SK-N-SH (cell line): ENCODE measurements at regions of chr3 and their contacts with region 1.

Region 1: DNA sequence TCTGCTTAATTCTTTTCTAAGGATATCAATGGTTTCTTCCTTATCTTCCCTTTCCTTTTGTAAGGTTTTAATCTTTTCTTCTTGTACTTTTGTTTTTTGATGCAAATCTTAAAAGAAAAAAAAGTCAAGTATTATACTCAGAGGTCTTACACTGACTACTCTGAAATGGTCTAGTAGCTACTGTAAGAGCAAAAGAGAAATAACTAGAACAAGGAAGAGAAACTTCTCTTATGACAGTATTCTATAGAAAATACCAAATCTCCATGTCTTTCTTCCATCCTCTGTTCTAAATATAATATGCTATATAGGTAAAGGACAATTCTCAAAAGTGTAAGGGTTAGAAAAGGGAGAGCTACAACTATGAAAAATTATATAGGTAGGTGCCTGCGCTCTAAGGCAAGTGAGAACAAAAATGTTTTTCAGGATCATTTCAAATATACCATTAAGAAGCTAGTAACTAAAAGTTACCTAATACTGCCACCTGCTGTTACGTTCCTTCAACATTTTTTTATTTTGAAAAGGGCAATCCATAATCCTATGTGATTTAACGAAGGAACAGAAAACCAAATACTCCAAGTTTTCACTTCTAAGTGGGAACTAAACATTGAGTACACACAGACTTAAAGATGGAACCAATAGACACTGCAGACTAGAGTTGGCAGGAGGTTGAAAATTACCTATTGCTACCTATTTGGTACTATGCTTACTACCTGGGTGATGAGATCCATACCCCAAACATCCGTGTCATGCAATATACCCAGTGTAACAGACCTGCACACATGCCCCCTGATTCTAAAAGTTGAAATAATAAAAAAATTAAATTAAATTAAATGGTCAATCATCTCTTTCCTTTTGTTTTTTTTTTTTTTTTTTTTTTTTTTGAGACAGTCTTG is 36.7 kb downstream of the CIP2A start:
- DNase-seq: peak; percentile 11
- H3K4me3 ChIP-seq: no peak overlapping the region; a peak in 1 of 4 replicates
- H3K27ac ChIP-seq: peak overlapping the region; percentile 23 to 34; a peak in 1 of 4 replicates
- H3K4me1 ChIP-seq: no peaks in the 10 kb centered on the region; a peak in 1 of 4 replicates
- H3K27me3 ChIP-seq: no peaks in the 10 kb centered on the region
- CTCF ChIP-seq: peak; percentile 69
- EP300 ChIP-seq: no peak
- RAD21 ChIP-seq: peak; percentile 81

Region 2: DNA sequence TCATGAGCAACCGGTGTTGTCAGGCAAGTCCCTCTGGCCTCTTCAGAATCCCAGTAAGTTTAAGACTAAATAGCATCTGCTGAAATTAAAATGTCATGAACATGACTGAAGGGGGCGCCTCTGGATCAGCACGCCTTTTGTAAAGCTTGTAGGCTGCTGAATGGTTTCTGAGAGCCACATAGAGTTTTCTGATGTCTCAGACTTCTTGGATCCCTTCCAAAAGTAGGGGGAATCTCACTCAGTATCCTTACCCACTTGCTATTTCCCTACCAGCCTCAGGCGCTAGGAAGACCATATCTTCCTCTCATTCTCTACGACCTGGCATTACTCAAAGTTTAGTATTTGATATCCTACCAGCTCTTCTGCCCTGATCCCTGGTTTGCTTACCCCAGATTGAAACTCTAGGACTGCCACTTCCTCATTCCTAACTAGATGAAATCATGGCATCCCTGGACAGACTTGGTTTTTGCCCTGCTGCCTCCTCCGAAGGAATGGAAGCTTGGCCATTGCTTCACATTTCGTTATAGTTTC is 399.0 kb before region 1 on chr3:
- CTCF ChIA-PET with region 1: no interaction called
- POLR2A ChIA-PET with region 1: no interaction called
- DNase-seq: peak; percentile 17
- H3K4me3 ChIP-seq: no peak overlapping the region; a peak in 1 of 4 replicates
- H3K27ac ChIP-seq: no peak overlapping the region
- H3K4me1 ChIP-seq: peaks cover 0 to 5% of the 10 kb centered on the region in 2 experiments; a peak in 1 of 4 replicates
- H3K27me3 ChIP-seq: no peaks in the 10 kb centered on the region
- CTCF ChIP-seq: peak; percentile 54
- EP300 ChIP-seq: no peak
- RAD21 ChIP-seq: peak; percentile 74

Region 3: DNA sequence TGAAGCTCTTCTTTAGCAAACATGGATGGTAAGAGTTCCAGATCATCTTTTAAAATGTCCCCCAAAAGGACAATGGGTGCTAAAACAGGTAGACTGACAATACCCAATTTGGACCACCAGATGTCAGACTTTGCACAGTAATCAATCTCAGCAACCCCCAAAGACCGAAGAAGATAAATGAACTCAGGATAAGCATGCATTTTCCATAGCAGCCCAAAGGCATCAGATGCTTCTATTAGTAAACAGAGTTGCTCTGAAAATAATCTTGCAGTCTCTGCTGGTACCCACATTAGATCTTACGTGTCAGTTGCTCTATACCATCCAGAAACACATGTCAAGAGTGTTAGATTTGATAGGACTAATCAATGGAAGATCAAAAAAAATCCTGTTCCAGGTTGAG is 62.7 kb before region 1 on chr3:
- CTCF ChIA-PET with region 1: interaction called, 233 read pairs
- POLR2A ChIA-PET with region 1: no interaction called
- DNase-seq: peak; percentile 45
- H3K4me3 ChIP-seq: no peak overlapping the region; a peak in 1 of 4 replicates
- H3K27ac ChIP-seq: no peak overlapping the region
- H3K4me1 ChIP-seq: peaks cover 18 to 29% of the 10 kb centered on the region in 2 experiments
- H3K27me3 ChIP-seq: no peaks in the 10 kb centered on the region
- CTCF ChIP-seq: peak; percentile 78
- EP300 ChIP-seq: no peak
- RAD21 ChIP-seq: peak; percentile 97

Region 4: GRCh38 chr3:108497271-108497670 is 55.2 kb before region 1 on chr3:
- CTCF ChIA-PET with region 1: interaction called, 233 read pairs
- POLR2A ChIA-PET with region 1: no interaction called
- DNase-seq: no peak
- H3K4me3 ChIP-seq: no peak overlapping the region
- H3K27ac ChIP-seq: no peak overlapping the region
- H3K4me1 ChIP-seq: peaks cover 0 to 8% of the 10 kb centered on the region in 2 experiments; a peak in 1 of 4 replicates
- H3K27me3 ChIP-seq: no peaks in the 10 kb centered on the region
- CTCF ChIP-seq: no peak
- EP300 ChIP-seq: no peak
- RAD21 ChIP-seq: no peak

Region 5: GRCh38 chr3:108505811-108506210 is 46.7 kb before region 1 on chr3:
- CTCF ChIA-PET with region 1: interaction called, 41 read pairs
- POLR2A ChIA-PET with region 1: no interaction called
- DNase-seq: no peak
- H3K4me3 ChIP-seq: no peak overlapping the region
- H3K27ac ChIP-seq: no peak overlapping the region
- H3K4me1 ChIP-seq: peaks cover 0 to 18% of the 10 kb centered on the region in 2 experiments; a peak in 2 of 4 replicates
- H3K27me3 ChIP-seq: no peaks in the 10 kb centered on the region
- CTCF ChIP-seq: no peak; the same call in 1 of the 2 replicates
- EP300 ChIP-seq: no peak
- RAD21 ChIP-seq: peak; percentile 50

Region 6: DNA sequence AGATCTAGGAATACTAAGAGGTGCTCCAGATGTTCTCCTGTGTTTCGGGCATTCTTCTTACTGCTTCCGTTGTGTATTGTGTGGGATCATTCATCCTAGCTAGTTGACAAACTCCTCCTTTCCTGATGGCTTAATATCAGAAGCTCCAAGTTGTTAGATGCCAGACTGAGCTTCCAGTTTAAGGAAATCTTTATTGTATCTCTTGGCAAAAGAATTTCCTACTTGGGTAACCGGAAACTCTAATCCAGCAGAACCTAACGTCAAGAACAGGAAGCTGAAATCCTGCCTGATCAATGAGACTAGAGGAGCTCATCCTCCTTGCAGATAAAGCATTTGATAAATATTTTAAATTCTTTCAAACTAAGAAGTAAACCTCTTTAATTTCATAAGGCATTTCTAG is 14.4 kb before region 1 on chr3:
- CTCF ChIA-PET with region 1: interaction called, 22 read pairs
- POLR2A ChIA-PET with region 1: no interaction called
- DNase-seq: no peak
- H3K4me3 ChIP-seq: no peak overlapping the region
- H3K27ac ChIP-seq: no peak overlapping the region
- H3K4me1 ChIP-seq: no peaks in the 10 kb centered on the region
- H3K27me3 ChIP-seq: no peaks in the 10 kb centered on the region
- CTCF ChIP-seq: no peak
- EP300 ChIP-seq: no peak
- RAD21 ChIP-seq: no peak

Region 7: DNA sequence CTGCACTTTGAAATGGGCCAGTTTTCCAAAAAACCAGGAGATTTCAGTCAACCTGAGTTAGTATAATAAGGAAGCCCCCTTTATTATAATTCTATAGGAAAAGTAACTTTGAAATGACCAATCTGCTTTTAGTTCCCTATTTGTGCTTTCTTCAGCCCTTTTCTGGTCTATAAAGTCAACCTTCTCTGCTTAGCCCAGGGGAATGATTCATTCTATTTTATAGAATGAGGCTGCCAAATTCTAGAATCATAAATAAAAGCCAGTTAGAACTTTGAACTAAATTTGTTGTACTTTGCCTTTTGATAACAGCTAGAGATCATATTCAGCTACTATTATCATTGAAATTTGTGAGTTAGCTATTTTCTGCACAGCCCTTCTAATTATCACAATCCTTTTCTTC is 12.1 kb after region 1 on chr3:
- CTCF ChIA-PET with region 1: interaction called, 16 read pairs
- POLR2A ChIA-PET with region 1: no interaction called
- DNase-seq: no peak
- H3K4me3 ChIP-seq: no peak overlapping the region
- H3K27ac ChIP-seq: peak overlapping the region in 1 of 2 experiments; percentile 16; a peak in 1 of 4 replicates
- H3K4me1 ChIP-seq: no peaks in the 10 kb centered on the region; a peak in 1 of 4 replicates
- H3K27me3 ChIP-seq: no peaks in the 10 kb centered on the region
- CTCF ChIP-seq: no peak
- EP300 ChIP-seq: no peak
- RAD21 ChIP-seq: no peak